T-cell (primary cell): ENCODE measurements at regions of chr13 and their contacts with region 1.

Region 1: GRCh38 chr13:32581177-32581786 is 5.0 kb upstream of the PDS5B start:
- DNase-seq: peak in 1 of 35 experiments; percentile 45
- ATAC-seq: no peak
- H3K4me3 ChIP-seq: no peak overlapping the region
- H3K4me3 Mint-ChIP-seq: no peak overlapping the region
- H3K27ac ChIP-seq: no peak overlapping the region
- H3K27ac Mint-ChIP-seq: no peak overlapping the region
- H3K4me1 ChIP-seq: peaks cover 4 to 8% of the 10 kb centered on the region in 2 experiments
- H3K4me1 Mint-ChIP-seq: peaks cover 8 to 10% (median 10%) of the 10 kb centered on the region in 3 donors
- H3K27me3 ChIP-seq: no peaks in the 10 kb centered on the region
- H3K27me3 Mint-ChIP-seq: no peaks in the 10 kb centered on the region

Region 2: DNA sequence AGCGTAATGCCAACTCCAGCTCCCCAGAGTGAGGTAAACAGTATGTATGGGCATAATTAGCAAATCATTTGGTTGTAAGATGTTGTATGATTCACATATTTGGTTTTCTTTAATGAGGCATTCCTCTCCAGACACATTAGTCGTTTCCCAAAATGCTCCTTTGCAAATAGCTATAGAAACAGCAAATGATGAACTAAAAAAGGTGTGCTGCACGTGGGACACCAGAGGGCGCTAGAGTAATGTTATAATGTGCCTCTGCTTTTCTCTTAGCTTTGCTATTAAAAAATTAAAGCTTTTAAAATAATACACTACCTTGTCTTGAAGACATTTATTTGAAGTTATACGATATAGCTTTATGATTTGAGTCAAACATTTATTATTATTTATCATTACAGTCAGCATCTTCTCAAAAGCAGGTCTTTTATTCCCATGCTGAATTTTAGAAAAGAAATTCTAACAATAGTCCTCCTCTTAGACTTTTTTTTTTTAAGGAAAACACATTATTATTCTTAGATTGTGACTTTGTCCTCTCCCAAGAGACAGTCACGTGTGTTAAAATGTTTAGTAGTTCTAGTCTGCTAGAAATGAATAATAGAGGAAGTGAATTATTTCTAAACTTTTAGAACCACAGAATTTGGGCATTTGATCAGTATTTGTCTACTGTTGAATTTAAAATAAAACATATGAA is 671.3 kb before region 1 on chr13:
- CTCF ChIA-PET with region 1: interaction called, 5 to 16 read pairs
- POLR2A ChIA-PET with region 1: no interaction called
- DNase-seq: peak in 28 of 35 experiments; percentile 2 to 80 (median 32)
- ATAC-seq: no peak
- H3K4me3 ChIP-seq: no peak overlapping the region
- H3K4me3 Mint-ChIP-seq: no peak overlapping the region
- H3K27ac ChIP-seq: no peak overlapping the region
- H3K27ac Mint-ChIP-seq: no peak overlapping the region
- H3K4me1 ChIP-seq: no peaks in the 10 kb centered on the region
- H3K4me1 Mint-ChIP-seq: peaks cover 0 to 19% (median 0%) of the 10 kb centered on the region in 3 donors
- H3K27me3 ChIP-seq: no peaks in the 10 kb centered on the region
- H3K27me3 Mint-ChIP-seq: peaks cover 2 to 7% of the 10 kb centered on the region in 2 donors

Region 3: DNA sequence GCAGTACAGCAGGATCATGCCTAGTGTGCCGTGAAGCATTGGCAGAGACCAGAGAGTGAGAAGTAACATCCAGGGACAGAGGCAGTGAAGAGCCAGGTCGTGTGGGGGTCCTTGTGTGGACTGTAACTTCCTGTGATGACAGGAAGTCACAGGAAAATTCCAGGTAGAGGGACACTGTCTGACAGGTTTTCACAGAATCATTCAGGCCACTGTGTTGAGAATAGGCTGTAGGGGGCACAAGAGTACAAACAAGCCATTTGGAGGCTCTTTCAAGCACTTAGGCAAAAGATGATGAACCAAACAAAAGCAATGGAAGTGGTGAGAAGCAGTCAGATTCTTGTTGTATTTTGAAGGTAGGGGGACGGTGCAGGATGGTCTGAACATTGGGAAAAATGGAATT is 199.7 kb before region 1 on chr13:
- CTCF ChIA-PET with region 1: interaction called, 4 to 13 read pairs
- POLR2A ChIA-PET with region 1: no interaction called
- DNase-seq: peak in 15 of 35 experiments; percentile 4 to 61 (median 11)
- ATAC-seq: peak; percentile 36 to 78 (median 50)
- H3K4me3 ChIP-seq: no peak overlapping the region
- H3K4me3 Mint-ChIP-seq: no peak overlapping the region
- H3K27ac ChIP-seq: no peak overlapping the region
- H3K27ac Mint-ChIP-seq: no peak overlapping the region
- H3K4me1 ChIP-seq: peaks cover 2 to 3% of the 10 kb centered on the region in 2 experiments
- H3K4me1 Mint-ChIP-seq: no peaks in the 10 kb centered on the region
- H3K27me3 ChIP-seq: no peaks in the 10 kb centered on the region
- H3K27me3 Mint-ChIP-seq: no peaks in the 10 kb centered on the region

Region 4: GRCh38 chr13:32538621-32539246 is 42.5 kb before region 1 on chr13 and contains the start of gene N4BP2L2:
- CTCF ChIA-PET with region 1: interaction called, 5 to 18 read pairs
- POLR2A ChIA-PET with region 1: interaction called in 1 of 2 experiments, 4 read pairs
- DNase-seq: peak; percentile 75 to 96 (median 91)
- ATAC-seq: peak; percentile 96 to 98 (median 98)
- H3K4me3 ChIP-seq: peak within 1 kb of the TSS; percentile 65 to 100
- H3K4me3 Mint-ChIP-seq: peak within 1 kb of the TSS; percentile 99
- H3K27ac ChIP-seq: peak within 1 kb of the TSS; percentile 97
- H3K27ac Mint-ChIP-seq: peak within 1 kb of the TSS; percentile 99 to 100
- H3K4me1 ChIP-seq: peaks cover 7 to 30% of the 10 kb centered on the region in 2 experiments
- H3K4me1 Mint-ChIP-seq: peaks cover 45 to 47% (median 46%) of the 10 kb centered on the region in 3 donors
- H3K27me3 ChIP-seq: no peaks in the 10 kb centered on the region
- H3K27me3 Mint-ChIP-seq: peaks cover 2 to 6% of the 10 kb centered on the region in 2 donors
- total RNA-seq, gene N4BP2L2: 200 to 241 (median 216) TPM

Region 5: GRCh38 chr13:33125821-33126570 is 544.7 kb after region 1 on chr13:
- CTCF ChIA-PET with region 1: no interaction called
- POLR2A ChIA-PET with region 1: no interaction called
- DNase-seq: no peak
- ATAC-seq: no peak
- H3K4me3 ChIP-seq: no peak overlapping the region
- H3K4me3 Mint-ChIP-seq: no peak overlapping the region
- H3K27ac ChIP-seq: no peak overlapping the region
- H3K27ac Mint-ChIP-seq: no peak overlapping the region
- H3K4me1 ChIP-seq: no peaks in the 10 kb centered on the region
- H3K4me1 Mint-ChIP-seq: peaks cover 0 to 5% (median 0%) of the 10 kb centered on the region in 3 donors
- H3K27me3 ChIP-seq: peaks cover 0 to 7% of the 10 kb centered on the region in 2 experiments
- H3K27me3 Mint-ChIP-seq: peaks cover 2 to 4% of the 10 kb centered on the region in 2 donors